ENCODE measurements at regions of chr16 and their contacts with region 1.

Region 1: DNA sequence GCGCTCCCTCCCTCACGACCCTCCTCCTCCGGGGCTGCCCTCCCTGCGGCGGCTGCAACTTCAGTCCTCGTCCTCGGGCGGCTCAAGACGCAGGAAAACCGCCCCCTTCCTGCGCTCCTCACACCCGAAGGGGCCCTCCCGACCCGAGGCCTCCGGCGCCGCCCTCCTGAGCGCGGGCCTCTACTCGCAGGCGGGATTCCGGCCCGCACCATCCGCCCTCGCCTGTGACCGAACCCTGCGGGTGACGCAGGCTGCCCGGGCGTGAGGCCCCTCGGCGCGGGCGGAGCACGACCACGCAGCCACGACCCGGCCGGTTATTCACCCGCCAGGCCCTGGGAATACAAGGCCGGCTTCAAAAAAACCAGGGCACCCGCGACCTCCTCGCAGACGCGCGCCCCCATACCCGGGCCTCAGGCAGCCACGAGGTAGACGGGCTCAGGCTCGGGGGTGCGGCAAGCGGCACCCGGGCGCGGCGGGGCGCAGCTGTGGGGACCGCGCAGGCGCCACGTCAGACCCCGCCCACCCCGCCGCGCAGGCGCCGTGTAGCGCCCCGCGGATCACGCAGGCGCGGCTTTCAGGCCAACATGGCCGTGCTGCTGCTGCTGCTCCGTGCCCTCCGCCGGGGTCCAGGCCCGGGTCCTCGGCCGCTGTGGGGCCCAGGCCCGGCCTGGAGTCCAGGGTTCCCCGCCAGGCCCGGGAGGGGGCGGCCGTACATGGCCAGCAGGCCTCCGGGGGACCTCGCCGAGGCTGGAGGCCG is at the start of gene SPG7:
- DNase-seq: peak; percentile 91
- H3K4me3 ChIP-seq: peak within 1 kb of the TSS; percentile 96
- H3K27ac ChIP-seq: peak within 1 kb of the TSS; percentile 94
- H3K4me1 ChIP-seq: peaks cover 21% of the 10 kb centered on the region
- H3K27me3 ChIP-seq: no peaks in the 10 kb centered on the region
- CTCF ChIP-seq: 0 out of 2 replicates have a peak, but pooled peaks have one; percentile 9
- total RNA-seq, gene SPG7: 100 and 113 TPM in 2 replicates

Region 2: DNA sequence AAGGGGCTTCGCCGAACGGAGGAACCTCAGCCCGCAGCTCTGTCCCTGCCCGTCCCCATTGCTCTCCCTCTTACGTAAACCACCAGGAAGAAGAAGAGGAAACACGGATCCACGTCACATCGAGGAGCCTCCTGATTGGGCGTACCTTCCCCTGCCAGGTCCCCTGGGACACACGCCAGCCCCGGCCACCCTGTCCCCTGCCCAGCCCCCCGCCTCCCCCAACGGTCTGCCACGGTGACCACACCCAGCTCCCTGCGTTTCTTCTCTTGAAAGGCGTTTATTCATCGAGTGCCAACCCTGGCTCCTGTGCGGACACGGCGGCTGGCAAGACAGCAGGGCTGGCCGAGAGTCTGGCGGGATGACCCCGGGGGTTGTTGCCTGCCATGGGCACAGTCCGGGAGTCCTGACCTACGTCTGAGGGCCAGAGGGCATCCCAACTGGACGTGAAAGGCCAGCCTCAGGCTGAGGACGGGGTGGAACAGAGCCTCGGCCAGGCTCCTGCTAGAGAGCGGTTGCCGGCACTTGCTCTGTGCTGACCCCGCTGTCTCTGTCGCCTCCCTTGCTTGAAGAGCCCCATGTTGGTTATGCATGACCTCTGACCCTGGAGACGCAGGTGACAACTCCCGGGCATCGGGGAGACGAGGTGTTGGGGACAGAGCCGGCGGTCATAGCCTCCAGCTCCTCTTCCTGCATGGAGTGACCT is 455.0 kb before region 1 on chr16:
- CTCF ChIA-PET with region 1: no interaction called
- POLR2A ChIA-PET with region 1: no interaction called
- intact Hi-C with region 1: no loop called
- DNase-seq: peak; percentile 79
- H3K4me3 ChIP-seq: peak overlapping the region; percentile 59
- H3K27ac ChIP-seq: no peak overlapping the region
- H3K4me1 ChIP-seq: peaks cover 40% of the 10 kb centered on the region
- H3K27me3 ChIP-seq: no peaks in the 10 kb centered on the region
- CTCF ChIP-seq: no peak

Region 3: GRCh38 chr16:89241187-89242007 is 266.6 kb before region 1 on chr16:
- CTCF ChIA-PET with region 1: no interaction called
- POLR2A ChIA-PET with region 1: no interaction called
- intact Hi-C with region 1: loop called (anchors 10 kb)
- DNase-seq: peak; percentile 82
- H3K4me3 ChIP-seq: peak overlapping the region; percentile 90
- H3K27ac ChIP-seq: peak overlapping the region; percentile 94
- H3K4me1 ChIP-seq: no peaks in the 10 kb centered on the region
- H3K27me3 ChIP-seq: no peaks in the 10 kb centered on the region
- CTCF ChIP-seq: no peak

Region 4: DNA sequence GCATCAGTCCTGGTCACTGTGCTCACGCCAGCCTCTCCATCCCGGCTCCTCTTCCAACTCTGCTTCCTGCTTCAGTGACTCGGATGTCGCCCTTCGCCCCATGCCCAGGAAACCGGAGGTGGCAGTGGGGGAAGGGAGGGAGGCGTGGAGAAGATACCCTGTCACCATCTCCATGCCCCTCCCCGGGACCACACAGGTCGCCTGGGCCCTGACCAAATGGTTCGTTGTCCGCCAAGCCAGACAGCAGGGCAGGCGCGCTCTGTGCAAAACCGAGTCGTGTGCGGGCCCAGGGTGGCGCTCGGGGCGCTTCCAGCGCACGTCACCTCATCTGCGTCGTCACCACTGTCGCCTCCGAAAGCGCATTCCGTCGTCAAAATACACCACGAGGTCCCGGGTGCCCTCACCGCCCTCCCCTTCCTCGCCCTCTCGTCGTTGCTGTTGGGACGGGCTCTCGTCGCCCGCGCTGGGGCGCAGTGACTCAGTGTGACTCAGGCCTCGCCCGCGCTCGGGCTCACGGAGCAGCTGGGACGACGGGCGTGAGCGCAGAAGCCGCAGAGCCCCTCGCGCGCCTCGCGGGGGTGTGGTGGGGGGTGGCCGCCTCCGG is 251.3 kb before region 1 on chr16:
- CTCF ChIA-PET with region 1: no interaction called
- POLR2A ChIA-PET with region 1: interaction called, 12 read pairs
- intact Hi-C with region 1: no loop called
- DNase-seq: peak; percentile 76
- H3K4me3 ChIP-seq: peak overlapping the region; percentile 46
- H3K27ac ChIP-seq: no peak overlapping the region
- H3K4me1 ChIP-seq: peaks cover 9% of the 10 kb centered on the region
- H3K27me3 ChIP-seq: peaks cover 5% of the 10 kb centered on the region
- CTCF ChIP-seq: no peak

Region 5: DNA sequence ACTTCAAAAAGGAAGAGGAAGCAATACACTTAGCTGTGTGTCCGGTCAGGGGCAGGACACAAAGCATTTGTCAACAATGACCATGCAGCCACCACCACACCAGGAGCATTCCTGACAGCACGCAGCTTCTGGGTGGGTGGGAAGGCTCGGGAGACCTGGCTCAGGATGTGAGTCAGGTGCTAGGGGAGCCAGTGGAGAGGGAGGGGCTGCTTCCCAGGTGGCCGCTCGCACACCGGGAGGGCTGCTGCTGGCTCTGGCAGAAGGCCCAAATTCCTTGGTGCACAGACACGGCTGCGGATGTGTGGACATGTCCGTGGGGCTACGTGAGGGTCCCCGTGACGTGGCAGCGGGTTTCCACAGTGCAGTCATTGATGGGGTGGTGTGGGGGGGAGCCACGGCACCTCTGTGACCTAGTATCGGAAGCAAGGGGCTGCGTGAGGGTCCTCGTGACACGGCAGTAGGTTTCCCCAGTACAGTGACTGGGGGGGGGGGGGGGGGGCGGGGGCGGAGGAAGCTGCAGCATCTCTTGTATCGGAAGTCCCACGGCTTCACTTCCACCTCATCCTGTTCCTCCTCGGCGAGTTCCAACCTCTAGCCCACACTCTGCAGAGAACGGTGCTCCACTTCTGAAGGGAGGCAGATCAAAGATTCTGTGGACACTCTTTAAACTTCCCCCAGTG is 177.7 kb before region 1 on chr16:
- CTCF ChIA-PET with region 1: no interaction called
- POLR2A ChIA-PET with region 1: no interaction called
- intact Hi-C with region 1: loop called (anchors 5 kb)
- DNase-seq: no peak
- H3K4me3 ChIP-seq: no peak overlapping the region
- H3K27ac ChIP-seq: peak overlapping the region; percentile 40
- H3K4me1 ChIP-seq: peaks cover 77% of the 10 kb centered on the region
- H3K27me3 ChIP-seq: no peaks in the 10 kb centered on the region
- CTCF ChIP-seq: no peak

Region 6: DNA sequence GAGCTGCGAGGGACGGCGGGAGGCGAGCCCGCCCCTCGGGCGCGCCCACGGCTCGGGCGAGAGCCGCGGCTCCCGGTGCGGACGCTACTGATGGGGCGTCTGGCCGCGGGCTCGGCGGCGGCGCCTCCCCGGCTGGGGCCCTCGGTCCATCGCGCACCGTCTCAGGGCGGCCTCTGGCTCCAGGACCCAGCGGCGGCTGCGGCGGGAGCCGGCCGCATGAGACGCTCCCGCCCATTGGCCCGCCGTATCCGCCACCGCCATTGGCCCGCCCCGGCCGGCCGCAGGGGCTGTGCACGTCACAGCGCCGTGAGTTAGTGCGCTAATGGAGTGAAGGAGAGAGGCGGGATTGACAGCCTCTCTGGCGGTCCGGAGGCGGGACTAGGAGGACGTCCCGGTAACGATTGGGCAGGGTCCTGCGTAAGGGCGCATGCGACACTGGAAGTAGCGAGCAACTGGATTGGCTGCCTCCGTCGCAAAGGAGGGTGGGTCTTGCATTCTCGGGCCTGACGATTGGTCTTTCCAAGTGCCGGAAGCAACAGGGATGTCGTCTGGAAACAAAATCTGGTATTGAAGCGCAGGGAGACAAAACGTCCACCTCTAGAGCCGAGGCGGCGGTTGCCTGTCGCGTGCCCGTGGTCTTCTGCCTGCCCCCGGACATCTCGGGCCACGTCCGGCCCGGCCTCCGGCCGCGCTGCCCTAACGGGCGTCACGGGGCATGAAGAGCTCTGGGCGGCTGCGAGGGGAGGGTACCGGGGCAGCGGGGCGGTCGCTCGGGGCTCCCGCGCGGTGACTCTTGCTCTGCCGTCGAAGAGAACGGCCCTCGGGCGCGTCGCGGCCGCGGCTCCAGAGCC is 17.4 kb before region 1 on chr16 and contains the start of gene ANKRD11:
- CTCF ChIA-PET with region 1: no interaction called
- POLR2A ChIA-PET with region 1: interaction called, 13 read pairs
- intact Hi-C with region 1: no loop called
- DNase-seq: peak; percentile 100
- H3K4me3 ChIP-seq: peak within 1 kb of the TSS; percentile 86
- H3K27ac ChIP-seq: peak within 1 kb of the TSS; percentile 96
- H3K4me1 ChIP-seq: peaks cover 30% of the 10 kb centered on the region
- H3K27me3 ChIP-seq: no peaks in the 10 kb centered on the region
- CTCF ChIP-seq: no peak
- total RNA-seq, gene ANKRD11: 217 and 248 TPM in 2 replicates

Region 7: DNA sequence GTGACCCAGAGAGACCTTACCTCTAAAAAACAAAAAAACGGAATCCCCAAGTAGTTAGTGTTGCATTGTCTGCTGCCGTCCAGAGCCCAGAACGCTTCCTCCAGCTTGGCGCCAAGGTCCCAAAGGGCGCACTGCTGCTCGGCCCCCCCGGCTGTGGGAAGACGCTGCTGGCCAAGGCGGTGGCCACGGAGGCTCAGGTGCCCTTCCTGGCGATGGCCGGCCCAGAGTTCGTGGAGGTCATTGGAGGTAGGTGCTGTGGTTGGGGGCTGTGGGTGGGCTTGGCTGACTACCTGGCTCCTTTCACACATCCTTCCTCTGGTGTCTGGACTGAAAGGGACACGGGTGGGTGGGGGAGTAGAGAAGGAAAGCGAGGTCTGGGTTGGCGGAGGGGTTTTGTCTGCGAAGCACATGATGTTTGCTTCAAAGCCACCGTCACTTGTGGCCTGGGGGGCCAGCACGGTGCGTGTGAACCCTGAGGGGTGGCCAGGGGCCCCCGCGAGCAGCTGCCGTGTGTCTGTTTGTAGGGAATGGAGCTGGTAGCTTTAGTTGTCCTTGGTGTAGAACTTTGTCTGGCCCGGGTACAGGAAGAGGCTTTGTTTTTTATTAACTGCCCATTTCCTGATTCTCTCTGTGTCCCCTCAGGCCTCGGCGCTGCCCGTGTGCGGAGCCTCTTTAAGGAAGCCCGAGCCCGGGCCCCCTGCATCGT is 24.0 kb after region 1 on chr16:
- CTCF ChIA-PET with region 1: no interaction called
- POLR2A ChIA-PET with region 1: interaction called, 18 read pairs
- intact Hi-C with region 1: no loop called
- DNase-seq: no peak
- H3K4me3 ChIP-seq: no peak overlapping the region
- H3K27ac ChIP-seq: no peak overlapping the region
- H3K4me1 ChIP-seq: no peaks in the 10 kb centered on the region
- H3K27me3 ChIP-seq: no peaks in the 10 kb centered on the region
- CTCF ChIP-seq: no peak

Measured in A673 (cell line).